IMR-90 (cell line): ENCODE measurements at regions of chr13 and their contacts with region 1.

Region 1: DNA sequence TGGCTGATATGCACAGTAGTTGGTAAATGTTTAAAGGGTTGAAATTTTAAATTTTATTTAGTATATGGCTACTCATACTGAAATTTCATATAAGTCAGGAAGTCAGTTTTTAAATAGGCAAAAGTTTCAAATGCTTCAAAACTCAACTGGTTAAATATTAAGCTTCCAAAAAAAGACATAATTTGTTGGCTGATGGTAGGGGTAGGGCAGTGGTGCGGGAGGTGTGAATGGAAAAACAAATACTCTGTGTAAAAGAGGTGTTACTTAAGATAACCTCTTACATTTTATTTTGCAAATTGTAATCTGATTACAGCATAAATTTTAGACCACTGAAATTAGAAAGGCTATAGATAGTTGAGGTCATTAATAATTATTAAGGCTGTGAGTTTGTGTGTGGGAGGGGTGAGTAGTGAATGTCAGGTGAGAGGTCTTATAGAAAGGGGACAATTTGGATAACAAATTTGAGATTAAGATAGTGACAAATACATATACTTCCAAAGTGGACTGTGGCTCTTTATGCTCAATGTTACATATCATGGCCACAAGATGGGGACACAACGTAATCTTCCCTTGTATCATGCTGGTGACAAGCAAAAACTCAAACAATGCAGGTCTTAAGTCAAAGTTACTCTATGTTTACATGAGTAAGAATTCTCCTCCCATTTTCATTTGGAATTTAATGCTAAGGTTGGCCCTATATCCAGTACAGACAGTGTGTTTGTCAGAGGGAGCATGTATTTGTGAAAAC is 36.6 kb upstream of the OXGR1 start:
- DNase-seq: peak; percentile 61
- ATAC-seq: peak; percentile 67
- H3K4me3 ChIP-seq: no peak overlapping the region
- H3K27ac ChIP-seq: no peak overlapping the region
- H3K4me1 ChIP-seq: 0 out of 2 replicates have a peak, but pooled peaks cover 2% of the 10 kb centered on the region
- H3K27me3 ChIP-seq: no peaks in the 10 kb centered on the region; the same call in 1 of the 2 replicates
- CTCF ChIP-seq: peak; percentile 49
- POLR2A ChIP-seq: no peak
- RAD21 ChIP-seq: peak; percentile 51

Region 2: GRCh38 chr13:96141027-96141426 is 889.9 kb before region 1 on chr13:
- CTCF ChIA-PET with region 1: no interaction called
- POLR2A ChIA-PET with region 1: no interaction called
- dilution Hi-C with region 1: no loop called
- in situ Hi-C with region 1: no loop called
- intact Hi-C with region 1: loop called (anchors 2 kb)
- DNase-seq: peak; percentile 2
- ATAC-seq: no peak
- H3K4me3 ChIP-seq: no peak overlapping the region
- H3K27ac ChIP-seq: no peak overlapping the region
- H3K4me1 ChIP-seq: no peaks in the 10 kb centered on the region
- H3K27me3 ChIP-seq: no peaks in the 10 kb centered on the region
- CTCF ChIP-seq: 0 out of 2 replicates have a peak, but pooled peaks have one; percentile 9
- POLR2A ChIP-seq: no peak
- RAD21 ChIP-seq: no peak

Region 3: GRCh38 chr13:97212601-97213040 is 181.7 kb after region 1 on chr13:
- CTCF ChIA-PET with region 1: no interaction called
- POLR2A ChIA-PET with region 1: no interaction called
- dilution Hi-C with region 1: no loop called
- in situ Hi-C with region 1: no loop called
- intact Hi-C with region 1: loop called (anchors 5 kb)
- DNase-seq: peak; percentile 49
- ATAC-seq: peak; percentile 91
- H3K4me3 ChIP-seq: no peak overlapping the region
- H3K27ac ChIP-seq: no peak overlapping the region
- H3K4me1 ChIP-seq: peaks cover 7% of the 10 kb centered on the region
- H3K27me3 ChIP-seq: no peaks in the 10 kb centered on the region
- CTCF ChIP-seq: peak; percentile 71
- POLR2A ChIP-seq: no peak
- RAD21 ChIP-seq: peak; percentile 73

Region 4: DNA sequence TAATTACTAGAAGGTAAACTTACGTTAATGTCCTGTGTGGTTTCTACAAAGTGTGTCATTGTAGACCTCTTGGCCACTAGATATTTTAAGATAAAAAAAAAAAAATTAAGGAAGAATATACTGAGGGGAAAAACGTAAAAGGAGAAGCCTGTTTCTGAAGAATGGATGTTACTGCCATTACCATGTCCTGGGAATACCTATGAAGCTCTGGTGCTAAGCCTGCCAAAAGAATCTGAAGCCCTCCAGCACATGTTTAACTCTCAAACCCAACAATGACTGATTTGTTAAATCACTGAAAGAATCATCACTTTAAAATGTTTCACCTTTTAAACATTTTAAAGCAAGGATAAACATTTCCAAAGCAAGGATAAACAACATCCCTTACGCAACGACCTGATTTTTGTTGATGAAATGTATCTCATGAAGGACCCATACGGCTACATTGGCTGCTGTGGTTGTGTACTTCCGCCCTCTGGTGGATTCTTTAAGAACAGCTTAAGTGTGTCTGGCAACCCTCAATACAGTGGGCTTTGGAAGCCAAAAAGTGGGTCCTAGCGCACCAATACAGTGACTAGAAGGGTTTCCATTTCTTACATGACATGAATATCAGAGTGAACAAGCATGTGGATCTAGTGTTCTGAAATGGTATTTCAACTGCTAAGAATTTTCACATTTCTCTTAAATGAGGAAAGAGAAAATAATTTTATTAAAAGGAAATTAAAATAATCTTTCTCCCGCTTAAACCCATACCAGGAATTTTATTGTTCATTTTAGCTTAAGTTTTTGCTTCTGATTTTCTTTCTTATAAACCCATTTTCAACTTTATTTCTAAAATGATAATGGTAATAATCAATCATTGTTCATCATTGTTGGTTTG is 328.5 kb after region 1 on chr13:
- CTCF ChIA-PET with region 1: no interaction called
- POLR2A ChIA-PET with region 1: no interaction called
- dilution Hi-C with region 1: no loop called
- in situ Hi-C with region 1: loop called (anchors 10 kb)
- intact Hi-C with region 1: no loop called
- DNase-seq: peak; percentile 92
- ATAC-seq: peak; percentile 95
- H3K4me3 ChIP-seq: no peak overlapping the region
- H3K27ac ChIP-seq: no peak overlapping the region
- H3K4me1 ChIP-seq: peaks cover 3% of the 10 kb centered on the region; the same call in 1 of the 2 replicates
- H3K27me3 ChIP-seq: no peaks in the 10 kb centered on the region
- CTCF ChIP-seq: peak; percentile 81
- POLR2A ChIP-seq: 0 out of 2 replicates have a peak, but pooled peaks have one; percentile 37
- RAD21 ChIP-seq: peak; percentile 91

Region 5: GRCh38 chr13:97574926-97575325 is 544.0 kb after region 1 on chr13:
- CTCF ChIA-PET with region 1: no interaction called
- POLR2A ChIA-PET with region 1: no interaction called
- dilution Hi-C with region 1: no loop called
- in situ Hi-C with region 1: no loop called
- intact Hi-C with region 1: loop called (anchors 10 kb)
- DNase-seq: peak; percentile 52
- ATAC-seq: peak; percentile 80
- H3K4me3 ChIP-seq: no peak overlapping the region
- H3K27ac ChIP-seq: no peak overlapping the region
- H3K4me1 ChIP-seq: peaks cover 2% of the 10 kb centered on the region; the same call in 1 of the 2 replicates
- H3K27me3 ChIP-seq: peaks cover 2% of the 10 kb centered on the region; the same call in 1 of the 2 replicates
- CTCF ChIP-seq: peak; percentile 55
- POLR2A ChIP-seq: no peak
- RAD21 ChIP-seq: peak; percentile 64

Region 6: DNA sequence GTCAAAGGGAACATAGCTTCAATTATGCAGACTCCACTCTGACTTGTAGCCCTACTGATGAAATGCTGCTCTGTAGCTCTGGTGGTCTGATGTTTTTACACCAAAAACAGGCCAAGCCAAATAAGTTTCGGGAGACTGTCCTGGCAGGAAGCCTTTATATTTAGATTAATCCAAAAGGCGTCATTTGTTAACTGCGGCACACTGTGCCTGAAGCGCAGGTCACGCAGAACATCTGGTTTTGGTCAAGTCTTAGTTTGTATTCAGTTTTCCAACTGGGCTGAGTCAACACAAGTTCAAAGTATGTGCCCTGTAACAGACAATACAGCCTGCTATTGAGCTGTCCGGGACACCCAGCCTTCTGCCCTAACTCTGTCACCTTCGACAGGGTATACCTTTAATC is 768.0 kb after region 1 on chr13:
- CTCF ChIA-PET with region 1: no interaction called
- POLR2A ChIA-PET with region 1: no interaction called
- dilution Hi-C with region 1: no loop called
- in situ Hi-C with region 1: no loop called
- intact Hi-C with region 1: no loop called
- DNase-seq: peak; percentile 15
- ATAC-seq: peak; percentile 59
- H3K4me3 ChIP-seq: no peak overlapping the region
- H3K27ac ChIP-seq: no peak overlapping the region
- H3K4me1 ChIP-seq: peaks cover 2% of the 10 kb centered on the region; the same call in 1 of the 2 replicates
- H3K27me3 ChIP-seq: peaks cover 9% of the 10 kb centered on the region
- CTCF ChIP-seq: no peak
- POLR2A ChIP-seq: no peak
- RAD21 ChIP-seq: no peak